Cardiac septum (tissue), 1 donor: ENCODE measurements at regions of chr3 and their contacts with region 1.

Region 1: DNA sequence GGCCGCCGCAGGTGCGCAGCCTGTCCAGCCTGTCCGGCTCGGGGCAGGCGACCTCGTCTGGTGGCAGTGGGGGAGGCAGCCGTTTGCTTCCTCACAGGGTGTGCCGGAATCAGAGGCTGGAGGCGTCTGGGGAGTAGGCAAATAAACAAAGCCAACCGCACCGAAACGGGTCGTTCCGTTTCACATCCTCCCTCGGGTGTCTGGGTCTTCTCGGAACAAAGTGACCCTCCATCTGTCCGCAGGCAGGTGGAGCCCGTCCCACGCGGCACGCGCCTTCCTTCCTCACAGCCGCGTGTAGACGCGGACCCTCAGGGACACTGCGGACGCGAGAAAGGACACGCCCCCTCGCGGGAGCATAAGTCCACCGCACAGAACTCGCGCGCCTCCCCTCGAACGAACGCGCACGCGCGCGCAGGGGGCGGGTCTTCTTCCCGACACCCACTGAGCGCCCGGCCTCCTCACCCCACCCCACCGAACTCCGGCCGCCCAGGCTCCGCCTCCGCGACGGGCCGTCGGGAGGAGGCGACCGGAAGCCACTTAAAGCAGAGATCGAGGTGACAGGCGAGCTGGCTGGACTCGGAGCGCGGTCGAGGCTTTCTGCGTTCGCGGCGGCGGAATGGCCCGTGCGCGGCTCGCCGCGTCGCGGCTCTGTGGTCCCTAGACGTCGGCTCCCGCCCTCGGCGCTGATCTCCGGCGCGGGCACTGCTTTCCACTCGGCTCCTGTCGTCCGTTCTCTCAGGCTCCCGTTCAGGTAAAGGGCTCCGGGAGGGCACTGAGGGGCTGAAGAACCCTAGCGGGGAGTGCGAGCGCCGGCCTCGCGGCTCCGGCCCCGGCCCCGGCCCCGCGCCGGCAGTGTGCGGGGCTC is at the start of gene TIPARP:
- DNase-seq: peak; percentile 100
- total RNA-seq, gene TIPARP: 17.9 TPM

Region 2: GRCh38 chr3:156542715-156543555 is 131.3 kb before region 1 on chr3:
- intact Hi-C with region 1: loop called (anchors 5 kb)
- DNase-seq: no peak

Region 3: GRCh38 chr3:156605686-156606605 is 68.3 kb before region 1 on chr3:
- intact Hi-C with region 1: loop called (anchors 1 kb)
- DNase-seq: no peak

Region 4: DNA sequence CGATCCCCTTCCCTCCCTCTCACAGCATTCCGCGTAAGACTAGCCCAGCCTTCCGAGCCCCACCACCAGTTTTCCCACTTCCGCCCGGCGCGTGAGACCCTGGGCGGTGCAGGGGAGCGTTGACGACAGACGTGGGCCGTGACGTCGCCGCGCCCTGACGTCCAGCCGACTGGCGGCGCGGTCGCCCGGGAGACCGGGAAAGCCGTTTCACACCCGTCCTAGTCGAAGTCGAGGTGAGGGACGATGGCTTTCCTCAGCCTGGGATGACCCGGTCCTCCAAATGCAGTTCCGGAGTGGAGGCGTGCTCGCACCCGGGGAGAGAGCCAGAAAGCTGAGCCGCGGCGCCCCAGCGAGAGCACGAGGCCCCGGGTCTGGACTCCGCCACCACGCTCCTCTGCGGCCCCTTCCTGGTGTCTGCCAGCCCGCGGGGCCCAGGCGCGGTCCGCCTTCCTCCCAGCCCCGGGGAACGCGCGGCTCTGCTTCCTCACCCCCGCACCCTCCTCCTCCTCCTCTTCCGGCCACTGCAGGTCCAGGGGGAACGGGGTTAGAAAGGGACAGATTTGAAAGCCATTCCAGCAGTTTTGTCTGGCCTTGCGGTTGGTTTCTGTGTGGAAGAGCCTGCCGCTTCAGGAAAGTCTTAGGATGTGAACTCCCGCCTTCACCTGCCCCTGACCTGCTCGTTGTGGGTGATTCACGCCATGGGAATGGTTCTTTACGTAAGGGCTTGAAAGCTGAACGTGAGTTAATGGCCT is 152.0 kb after region 1 on chr3 and contains the start of gene LEKR1:
- intact Hi-C with region 1: loop called (anchors 2 kb)
- DNase-seq: peak; percentile 91
- total RNA-seq, gene LEKR1: 0.32 TPM

Region 5: DNA sequence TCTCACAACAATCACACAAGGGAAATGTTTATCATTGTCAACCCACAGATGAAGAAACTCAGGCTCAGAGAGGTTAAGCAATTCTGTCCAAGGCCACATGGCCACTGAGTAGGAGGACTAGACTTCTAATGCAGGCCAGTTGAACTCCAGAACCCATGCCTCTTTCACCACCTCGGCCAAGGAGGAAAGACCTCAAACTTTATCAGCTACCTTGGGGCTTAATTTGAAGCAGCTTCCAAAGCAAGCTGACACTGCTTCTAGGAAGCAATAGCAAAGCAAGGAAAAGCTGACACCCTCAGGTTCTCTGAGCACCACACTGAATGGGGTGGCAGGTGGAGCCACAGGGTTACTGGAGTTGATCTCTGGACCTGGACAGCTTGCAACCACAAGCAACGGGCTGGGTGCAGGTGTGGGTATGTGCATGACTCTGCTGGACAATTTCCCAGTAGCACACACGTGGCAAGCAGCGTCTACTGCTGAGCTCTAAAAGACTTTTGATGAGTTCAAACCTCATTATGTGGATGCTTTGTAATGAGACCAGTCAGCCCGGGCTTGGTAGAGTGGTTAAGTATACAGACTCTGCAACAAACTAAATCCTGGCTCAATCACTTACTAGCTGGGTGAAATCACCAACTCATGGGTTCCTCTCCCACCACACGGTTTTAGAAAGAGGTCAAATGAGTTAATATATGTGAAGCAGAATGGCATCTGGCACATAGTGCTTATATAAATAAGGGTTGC is 462.5 kb after region 1 on chr3:
- intact Hi-C with region 1: loop called (anchors 2 kb)
- DNase-seq: no peak